ENCODE measurements at regions of chr19 and their contacts with region 1.

Region 1: GRCh38 chr19:18117692-18118378 is 20.3 kb downstream of the MAST3 start:
- DNase-seq: peak; percentile 96
- ATAC-seq: peak; percentile 78
- H3K4me3 Mint-ChIP-seq: peak overlapping the region; percentile 81
- H3K27ac Mint-ChIP-seq: peak overlapping the region; percentile 83; the same call in 1 of the 2 replicates
- H3K4me1 Mint-ChIP-seq: peaks cover 28% of the 10 kb centered on the region
- H3K27me3 Mint-ChIP-seq: peaks cover 9% of the 10 kb centered on the region
- CTCF ChIP-seq: no peak

Region 2: DNA sequence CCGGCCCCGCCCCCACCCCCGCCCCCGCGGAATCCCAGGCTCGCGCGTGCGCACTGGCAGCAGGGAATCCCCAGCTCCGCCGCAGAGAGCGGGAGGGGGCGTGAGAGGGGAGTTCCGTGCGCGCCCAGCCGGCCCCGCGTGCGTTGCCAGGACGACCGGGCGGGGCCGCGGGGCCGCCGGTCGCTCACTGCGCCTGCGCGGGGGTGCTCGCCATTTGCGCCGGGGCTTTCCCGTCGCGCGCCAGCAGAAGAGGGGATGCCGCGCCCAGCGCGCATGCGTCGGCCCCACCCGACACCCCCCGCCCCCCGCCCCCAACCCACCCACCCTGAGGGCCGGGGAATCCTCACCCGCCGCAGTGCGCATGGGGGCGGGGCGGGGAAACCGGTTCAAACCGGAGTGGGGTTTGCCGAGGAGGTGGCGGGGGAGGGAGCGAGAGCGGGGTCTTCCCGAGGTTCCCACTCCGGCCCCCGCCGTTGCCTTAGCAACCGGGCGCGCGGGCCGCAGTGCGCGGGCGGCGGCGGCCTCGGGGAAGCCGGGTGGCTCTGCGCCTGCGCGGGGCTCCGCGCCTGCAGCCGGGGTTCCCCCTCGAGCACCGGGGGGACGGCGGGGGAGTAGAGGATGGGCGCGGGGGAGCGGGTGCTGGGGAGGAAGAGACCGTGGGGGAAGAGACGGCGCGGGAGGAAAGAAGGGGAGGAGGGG is 169.9 kb before region 1 on chr19:
- CTCF ChIA-PET with region 1: interaction called, 10 read pairs
- POLR2A ChIA-PET with region 1: no interaction called
- DNase-seq: peak; percentile 97
- ATAC-seq: peak; percentile 27
- H3K4me3 Mint-ChIP-seq: peak overlapping the region; percentile 77
- H3K27ac Mint-ChIP-seq: no peak overlapping the region
- H3K4me1 Mint-ChIP-seq: peaks cover 28% of the 10 kb centered on the region
- H3K27me3 Mint-ChIP-seq: peaks cover 41% of the 10 kb centered on the region
- CTCF ChIP-seq: no peak

Region 3: DNA sequence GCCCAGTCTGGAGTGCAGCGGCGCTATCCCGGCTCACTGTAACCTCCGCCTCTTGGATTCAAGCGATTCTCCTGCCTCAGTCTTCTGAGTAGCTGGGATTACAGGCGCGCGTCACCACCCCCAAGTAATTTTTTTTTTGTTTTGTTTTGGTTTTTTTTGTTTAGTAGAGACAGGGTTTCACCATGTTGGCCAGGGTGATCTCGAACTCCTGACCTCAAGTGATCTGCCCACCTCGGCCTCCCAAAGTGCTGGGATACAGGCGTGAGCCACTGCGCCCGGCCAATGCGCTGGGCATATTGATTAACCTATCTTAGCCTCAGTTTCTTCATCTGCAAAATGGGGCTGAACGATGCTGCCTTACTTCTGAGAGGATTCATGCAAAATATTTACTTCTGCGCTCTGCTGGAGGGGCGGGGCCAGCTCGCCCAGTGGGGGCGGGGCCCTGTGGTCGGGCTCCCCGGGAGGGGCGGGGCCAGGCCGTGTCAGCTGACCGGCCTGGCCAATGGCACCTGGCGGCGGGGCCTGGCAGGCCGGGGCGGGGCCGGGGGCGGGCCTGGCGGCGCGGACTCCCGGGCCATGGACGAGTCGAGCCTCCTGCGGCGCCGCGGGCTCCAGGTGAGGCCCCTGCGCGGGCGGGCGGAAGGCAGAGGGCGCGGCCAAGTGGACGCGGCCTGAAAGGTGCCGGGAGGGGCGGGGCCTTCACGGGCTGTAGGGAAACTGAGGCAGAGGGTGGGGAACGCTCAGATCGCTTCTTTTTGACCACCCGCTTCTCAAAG is 20.4 kb before region 1 on chr19 and contains the start of gene MAST3:
- CTCF ChIA-PET with region 1: interaction called, 26 read pairs
- POLR2A ChIA-PET with region 1: no interaction called
- DNase-seq: peak; percentile 93
- ATAC-seq: peak; percentile 83
- H3K4me3 Mint-ChIP-seq: peak within 1 kb of the TSS; percentile 74
- H3K27ac Mint-ChIP-seq: no peak within 1 kb of the TSS
- H3K4me1 Mint-ChIP-seq: peaks cover 25% of the 10 kb centered on the region
- H3K27me3 Mint-ChIP-seq: peaks cover 19% of the 10 kb centered on the region
- CTCF ChIP-seq: no peak
- total RNA-seq, gene MAST3: 10.8 to 11.5 TPM (median 11.2 TPM) in 3 replicates

Region 4: GRCh38 chr19:18141031-18141430 is 23.2 kb after region 1 on chr19:
- CTCF ChIA-PET with region 1: interaction called, 13 read pairs
- POLR2A ChIA-PET with region 1: no interaction called
- DNase-seq: no peak
- ATAC-seq: no peak
- H3K4me3 Mint-ChIP-seq: no peak overlapping the region
- H3K27ac Mint-ChIP-seq: no peak overlapping the region
- H3K4me1 Mint-ChIP-seq: no peaks in the 10 kb centered on the region
- H3K27me3 Mint-ChIP-seq: no peaks in the 10 kb centered on the region
- CTCF ChIP-seq: no peak

Region 5: GRCh38 chr19:18167975-18168645 is 50.3 kb after region 1 on chr19:
- CTCF ChIA-PET with region 1: interaction called, 43 read pairs
- POLR2A ChIA-PET with region 1: no interaction called
- DNase-seq: peak; percentile 71
- ATAC-seq: peak; percentile 93
- H3K4me3 Mint-ChIP-seq: no peak overlapping the region
- H3K27ac Mint-ChIP-seq: no peak overlapping the region
- H3K4me1 Mint-ChIP-seq: no peaks in the 10 kb centered on the region; the same call in 1 of the 2 replicates
- H3K27me3 Mint-ChIP-seq: no peaks in the 10 kb centered on the region
- CTCF ChIP-seq: peak; percentile 81

Region 6: GRCh38 chr19:18203863-18204393 is 86.1 kb after region 1 on chr19 and contains the start of gene RAB3A:
- CTCF ChIA-PET with region 1: interaction called, 22 read pairs
- POLR2A ChIA-PET with region 1: no interaction called
- DNase-seq: peak; percentile 100
- ATAC-seq: peak; percentile 91
- H3K4me3 Mint-ChIP-seq: peak within 1 kb of the TSS; percentile 95
- H3K27ac Mint-ChIP-seq: peak within 1 kb of the TSS; percentile 99
- H3K4me1 Mint-ChIP-seq: peaks cover 22% of the 10 kb centered on the region
- H3K27me3 Mint-ChIP-seq: no peaks in the 10 kb centered on the region
- CTCF ChIP-seq: no peak
- total RNA-seq, gene RAB3A: 12.2 to 14.7 TPM (median 14.6 TPM) in 3 replicates

Region 7: GRCh38 chr19:18251587-18252369 is 133.9 kb after region 1 on chr19:
- CTCF ChIA-PET with region 1: interaction called, 24 read pairs
- POLR2A ChIA-PET with region 1: no interaction called
- DNase-seq: peak; percentile 93
- ATAC-seq: peak; percentile 83
- H3K4me3 Mint-ChIP-seq: no peak overlapping the region
- H3K27ac Mint-ChIP-seq: peak overlapping the region; percentile 35; the same call in 1 of the 2 replicates
- H3K4me1 Mint-ChIP-seq: peaks cover 22% of the 10 kb centered on the region
- H3K27me3 Mint-ChIP-seq: peaks cover 13% of the 10 kb centered on the region
- CTCF ChIP-seq: peak; percentile 99

Measured in WTC11 (cell line).